Activated CD8-positive, alpha-beta T cell treated with anti-CD3 and anti-CD28 coated beads, Interleukin-2, amount 10 ng/mL, durations not matched to agents 7 days and 5 days (primary cell): ENCODE measurements at regions of chr9 and their contacts with region 1.

Region 1: DNA sequence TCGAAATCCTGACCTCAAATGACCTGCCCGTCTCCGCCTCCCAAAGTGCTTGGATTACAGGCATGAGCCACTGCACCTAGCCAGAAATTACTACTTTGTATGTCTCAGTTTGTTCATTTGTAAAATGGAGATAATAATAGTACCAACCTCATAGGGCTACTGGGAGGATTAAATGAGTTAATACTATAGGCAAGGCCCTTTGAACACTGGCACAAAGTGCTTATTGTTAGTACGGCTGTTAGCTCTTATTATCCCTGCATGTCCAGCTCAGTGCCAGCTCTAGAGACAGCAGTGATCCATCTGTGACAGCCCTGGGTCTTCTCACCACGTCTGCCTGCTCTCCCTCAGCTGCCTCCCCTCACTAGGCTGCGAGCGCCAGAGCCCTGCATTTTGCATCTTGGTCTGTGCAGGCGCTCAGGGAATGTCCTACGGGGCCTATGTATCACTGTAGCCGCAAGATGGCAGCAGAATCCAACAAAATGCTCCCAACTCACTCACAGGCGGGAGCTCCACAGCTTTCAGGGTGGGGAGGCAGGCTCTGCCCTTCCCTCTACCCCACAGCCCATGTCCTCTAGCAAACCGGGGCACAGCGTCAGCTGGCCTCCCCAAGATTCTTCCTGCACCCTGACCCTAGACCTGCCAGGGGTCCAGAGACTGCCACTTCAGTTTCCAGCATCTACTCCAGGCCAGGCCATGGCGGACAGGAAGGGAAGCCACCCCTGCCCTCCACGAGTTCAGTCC is 17.7 kb upstream of the AKNA start:
- DNase-seq: peak; percentile 90
- ATAC-seq: peak; percentile 98
- H3K4me3 Mint-ChIP-seq: no peak overlapping the region
- H3K27ac Mint-ChIP-seq: peak overlapping the region; percentile 62
- H3K4me1 Mint-ChIP-seq: peaks cover 14% of the 10 kb centered on the region
- H3K27me3 Mint-ChIP-seq: peaks cover 1% of the 10 kb centered on the region

Region 2: GRCh38 chr9:114385412-114386181 is 19.9 kb before region 1 on chr9:
- CTCF ChIA-PET with region 1: interaction called, 35 read pairs
- POLR2A ChIA-PET with region 1: interaction called, 5 read pairs
- DNase-seq: peak; percentile 95
- ATAC-seq: peak; percentile 81
- H3K4me3 Mint-ChIP-seq: peak overlapping the region; percentile 99
- H3K27ac Mint-ChIP-seq: peak overlapping the region; percentile 95
- H3K4me1 Mint-ChIP-seq: peaks cover 50% of the 10 kb centered on the region
- H3K27me3 Mint-ChIP-seq: no peaks in the 10 kb centered on the region

Region 3: DNA sequence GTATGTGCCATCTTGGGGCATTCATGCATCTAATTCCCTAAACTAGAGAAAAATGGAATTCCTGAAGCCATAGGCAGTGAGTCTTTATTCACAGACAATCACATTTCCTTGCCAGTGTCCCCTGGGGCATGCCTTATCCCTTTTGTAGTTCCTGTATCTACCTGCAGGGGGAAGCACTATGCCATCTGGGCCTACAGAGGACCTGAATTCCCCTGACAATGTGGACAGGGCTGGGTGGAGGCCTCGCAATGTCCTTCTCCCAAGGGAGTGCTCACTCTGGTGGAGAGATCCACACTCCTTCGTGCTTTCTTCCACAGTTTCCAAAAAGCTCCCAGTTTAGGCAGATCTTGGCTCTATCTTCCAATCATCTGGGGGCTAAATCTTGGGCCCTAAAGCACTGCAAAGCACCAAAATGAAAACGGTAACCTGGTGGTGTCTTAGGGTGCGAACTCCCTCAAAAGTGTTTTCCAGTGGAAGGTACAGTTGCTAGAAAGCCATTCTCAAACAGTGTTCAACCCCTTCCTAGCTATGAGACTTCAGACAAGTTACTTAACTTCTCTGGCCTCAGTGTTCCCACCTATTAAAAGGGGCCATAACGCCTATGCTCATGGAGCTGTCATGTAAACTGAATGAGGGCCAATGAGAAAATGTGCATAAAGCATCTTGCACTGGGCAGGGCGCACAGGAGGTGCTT is 82.3 kb after region 1 on chr9:
- CTCF ChIA-PET with region 1: interaction called, 46 read pairs
- POLR2A ChIA-PET with region 1: no interaction called
- DNase-seq: peak; percentile 76
- ATAC-seq: peak; percentile 73
- H3K4me3 Mint-ChIP-seq: no peak overlapping the region
- H3K27ac Mint-ChIP-seq: no peak overlapping the region
- H3K4me1 Mint-ChIP-seq: peaks cover 26% of the 10 kb centered on the region
- H3K27me3 Mint-ChIP-seq: no peaks in the 10 kb centered on the region

Region 4: GRCh38 chr9:114641967-114642366 is 236.5 kb after region 1 on chr9:
- CTCF ChIA-PET with region 1: interaction called, 19 read pairs
- POLR2A ChIA-PET with region 1: no interaction called
- DNase-seq: no peak
- ATAC-seq: no peak
- H3K4me3 Mint-ChIP-seq: no peak overlapping the region
- H3K27ac Mint-ChIP-seq: no peak overlapping the region
- H3K4me1 Mint-ChIP-seq: peaks cover 4% of the 10 kb centered on the region
- H3K27me3 Mint-ChIP-seq: no peaks in the 10 kb centered on the region

Region 5: GRCh38 chr9:115013998-115014397 is 608.5 kb after region 1 on chr9:
- CTCF ChIA-PET with region 1: interaction called, 10 read pairs
- POLR2A ChIA-PET with region 1: no interaction called
- DNase-seq: peak; percentile 89
- ATAC-seq: peak; percentile 93
- H3K4me3 Mint-ChIP-seq: no peak overlapping the region
- H3K27ac Mint-ChIP-seq: peak overlapping the region; percentile 70
- H3K4me1 Mint-ChIP-seq: peaks cover 48% of the 10 kb centered on the region
- H3K27me3 Mint-ChIP-seq: no peaks in the 10 kb centered on the region